ENCODE measurements at regions of chr1 and their contacts with region 1.

Region 1: GRCh38 chr1:53321376-53321775 is 6.5 kb downstream of the LRP8 start:
- DNase-seq: peak; percentile 47 to 60 (median 57)
- H3K4me3 ChIP-seq: no peak overlapping the region
- H3K27ac ChIP-seq: no peak overlapping the region
- H3K4me1 ChIP-seq: peaks cover 3 to 68% (median 49%) of the 10 kb centered on the region in 4 experiments
- H3K27me3 ChIP-seq: no peaks in the 10 kb centered on the region

Region 2: GRCh38 chr1:53285969-53286760 is 35.2 kb before region 1 on chr1:
- CTCF ChIA-PET with region 1: interaction called, 79 read pairs
- POLR2A ChIA-PET with region 1: no interaction called
- DNase-seq: peak; percentile 14 to 74 (median 70)
- H3K4me3 ChIP-seq: peak overlapping the region in 3 of 7 experiments; percentile 19 to 34 (median 34)
- H3K27ac ChIP-seq: no peak overlapping the region
- H3K4me1 ChIP-seq: peaks cover 9 to 22% (median 17%) of the 10 kb centered on the region in 4 experiments
- H3K27me3 ChIP-seq: no peaks in the 10 kb centered on the region

Region 3: GRCh38 chr1:53511933-53512806 is 190.8 kb after region 1 on chr1:
- CTCF ChIA-PET with region 1: no interaction called
- POLR2A ChIA-PET with region 1: no interaction called
- DNase-seq: peak in 1 of 3 donors; percentile 15
- H3K4me3 ChIP-seq: no peak overlapping the region
- H3K27ac ChIP-seq: no peak overlapping the region
- H3K4me1 ChIP-seq: peaks cover 0 to 21% (median 18%) of the 10 kb centered on the region in 4 experiments
- H3K27me3 ChIP-seq: no peaks in the 10 kb centered on the region